K562 (cell line): ENCODE measurements at regions of chr2 and their contacts with region 1.

Region 1: DNA sequence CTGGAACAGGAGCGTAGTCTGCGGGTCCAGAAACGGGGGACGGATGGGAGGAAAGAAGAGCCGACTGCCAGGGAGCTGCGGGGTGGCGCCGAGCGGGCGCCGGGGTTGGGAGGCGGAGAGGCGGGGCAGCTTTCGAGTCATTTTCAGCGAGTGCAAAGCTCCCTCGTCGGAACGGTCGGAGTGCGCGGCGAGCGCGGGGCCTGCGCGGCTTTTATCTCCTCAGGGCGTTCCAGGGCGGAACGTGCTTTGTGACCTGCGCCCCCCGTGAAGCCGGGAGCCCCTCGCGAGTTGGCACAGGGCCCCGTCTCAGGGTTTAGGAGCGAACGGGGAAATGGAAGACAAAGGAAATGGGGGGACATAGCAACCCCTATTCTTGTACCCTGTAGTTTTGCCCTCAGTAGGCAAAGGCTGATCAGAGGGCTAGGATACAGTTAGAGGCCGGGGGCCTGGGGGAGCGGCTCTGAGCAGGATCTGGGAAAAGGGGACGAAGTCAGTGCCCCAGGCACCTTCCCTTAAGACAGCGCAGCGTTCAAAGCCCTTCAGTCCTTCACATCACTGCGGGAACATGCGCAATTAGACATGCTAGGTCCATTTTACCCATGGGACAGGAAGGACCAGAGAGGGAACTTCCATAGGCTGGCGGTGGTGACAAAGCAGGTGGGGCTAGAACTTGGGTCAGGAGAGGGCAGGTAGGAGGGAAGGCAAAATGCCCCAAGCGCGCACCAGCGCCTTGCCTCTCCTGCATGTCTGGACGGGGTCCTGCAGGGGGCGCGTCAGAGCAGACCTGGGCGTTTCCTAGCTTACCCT is 60.1 kb upstream of the IL1RL1 start:
- DNase-seq: peak in 2 of 4 experiments; percentile 25 to 34
- ATAC-seq: peak; percentile 63; the same call in 2 of the 3 replicates
- H3K4me3 ChIP-seq: no peak overlapping the region
- H3K27ac ChIP-seq: no peak overlapping the region
- H3K4me1 ChIP-seq: peaks cover 0 to 6% of the 10 kb centered on the region in 2 experiments; a peak in 1 of 5 replicates
- H3K27me3 ChIP-seq: 0 out of 5 replicates have a peak, but pooled peaks cover 0 to 4% of the 10 kb centered on the region in 2 experiments
- CTCF ChIP-seq: peak in 2 of 3 experiments; percentile 40 to 45; a peak in 3 of 6 replicates
- EP300 ChIP-seq: no peak
- POLR2A ChIP-seq: no peak
- RAD21 ChIP-seq: peak in 1 of 2 experiments; percentile 7; a peak in 1 of 4 replicates

Region 2: DNA sequence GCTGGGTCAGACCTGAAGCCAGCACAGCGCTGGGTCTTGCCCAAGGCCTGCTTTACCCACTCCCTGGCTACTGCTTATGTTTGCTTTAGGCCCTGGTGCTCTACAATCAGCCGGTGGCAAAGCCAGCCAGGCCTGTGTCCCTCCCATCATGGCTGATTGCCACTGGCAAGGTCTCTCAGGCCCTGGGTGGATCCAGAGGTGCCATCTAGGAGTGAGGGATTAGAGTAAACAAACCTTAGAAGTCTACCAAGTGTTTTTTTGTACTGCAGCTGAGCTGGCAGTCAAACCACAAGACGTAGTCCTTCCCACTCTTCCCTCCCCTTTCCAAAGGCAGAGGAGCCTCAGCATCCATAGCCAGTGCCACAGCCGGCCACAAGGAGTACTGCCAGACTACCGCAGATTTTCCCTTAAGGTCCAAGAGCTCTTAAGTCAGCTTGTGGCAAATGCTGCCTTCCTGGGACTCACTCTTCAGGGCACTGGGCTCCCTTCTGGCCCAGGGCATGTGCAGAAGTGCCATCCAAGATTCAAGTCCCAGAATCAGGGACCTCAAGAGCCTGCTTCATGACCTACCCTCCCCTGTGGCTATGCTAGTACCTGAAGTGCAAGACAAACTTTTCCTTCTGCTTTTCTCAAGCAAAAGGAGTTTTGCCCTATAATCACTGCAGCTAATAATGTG is 44.4 kb before region 1 on chr2:
- CTCF ChIA-PET with region 1: no interaction called
- POLR2A ChIA-PET with region 1: no interaction called
- in situ Hi-C with region 1: no loop called
- intact Hi-C with region 1: no loop called
- DNase-seq: no peak
- ATAC-seq: no peak
- H3K4me3 ChIP-seq: no peak overlapping the region
- H3K27ac ChIP-seq: no peak overlapping the region
- H3K4me1 ChIP-seq: no peaks in the 10 kb centered on the region
- H3K27me3 ChIP-seq: peaks cover 0 to 8% of the 10 kb centered on the region in 2 experiments; a peak in 1 of 5 replicates
- CTCF ChIP-seq: no peak
- EP300 ChIP-seq: no peak
- POLR2A ChIP-seq: no peak
- RAD21 ChIP-seq: no peak

Region 3: GRCh38 chr2:102226612-102227391 is 24.4 kb before region 1 on chr2:
- CTCF ChIA-PET with region 1: no interaction called
- POLR2A ChIA-PET with region 1: no interaction called
- in situ Hi-C with region 1: no loop called
- intact Hi-C with region 1: no loop called
- DNase-seq: no peak
- ATAC-seq: no peak
- H3K4me3 ChIP-seq: no peak overlapping the region
- H3K27ac ChIP-seq: peak overlapping the region; percentile 81
- H3K4me1 ChIP-seq: peaks cover 3 to 24% of the 10 kb centered on the region in 2 experiments; a peak in 4 of 5 replicates
- H3K27me3 ChIP-seq: no peaks in the 10 kb centered on the region
- CTCF ChIP-seq: no peak
- EP300 ChIP-seq: no peak
- POLR2A ChIP-seq: no peak
- RAD21 ChIP-seq: no peak

Region 4: GRCh38 chr2:102449370-102449974 is 198.2 kb after region 1 on chr2:
- CTCF ChIA-PET with region 1: interaction called, 8 read pairs
- POLR2A ChIA-PET with region 1: no interaction called
- in situ Hi-C with region 1: loop called (anchors 5 kb)
- intact Hi-C with region 1: loop called (anchors 5 kb)
- DNase-seq: peak; percentile 35 to 70 (median 40)
- ATAC-seq: peak; percentile 72; the same call in 2 of the 3 replicates
- H3K4me3 ChIP-seq: no peak overlapping the region
- H3K27ac ChIP-seq: no peak overlapping the region
- H3K4me1 ChIP-seq: no peaks in the 10 kb centered on the region
- H3K27me3 ChIP-seq: no peaks in the 10 kb centered on the region
- CTCF ChIP-seq: peak; percentile 66 to 84 (median 73); a peak in 5 of 6 replicates
- EP300 ChIP-seq: no peak
- POLR2A ChIP-seq: no peak
- RAD21 ChIP-seq: peak; percentile 86